ENCODE measurements at regions of chr6 and their contacts with region 1.

Region 1: DNA sequence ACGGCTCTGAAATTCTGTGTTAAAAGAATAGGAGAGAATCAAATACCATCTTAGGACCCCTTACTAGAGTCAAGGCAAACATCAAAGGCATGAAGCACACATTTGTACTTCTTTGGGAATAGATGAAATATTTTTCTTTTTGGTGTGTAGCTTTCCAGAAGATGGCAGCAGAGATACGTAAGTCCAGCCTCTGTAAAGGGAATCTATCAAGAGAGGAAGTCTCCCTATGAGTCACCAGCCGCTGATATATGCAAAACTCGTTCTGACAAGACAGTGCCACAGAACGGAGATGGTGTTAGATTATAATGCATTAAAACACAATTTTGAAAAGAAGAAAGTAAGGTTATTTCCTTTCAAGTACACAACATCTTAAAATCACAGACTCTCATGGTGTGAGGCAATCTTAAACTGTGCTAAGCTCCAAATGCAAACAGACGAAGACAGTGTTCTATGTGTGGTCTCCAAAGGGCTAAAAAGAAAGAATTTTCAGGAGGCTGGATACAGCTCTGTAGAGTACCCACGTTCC is 120.0 kb upstream of the AGPAT4 start:
- DNase-seq: peak; percentile 91
- H3K4me3 Mint-ChIP-seq: no peak overlapping the region
- H3K27ac Mint-ChIP-seq: no peak overlapping the region
- H3K4me1 Mint-ChIP-seq: peaks cover 7% of the 10 kb centered on the region
- H3K27me3 Mint-ChIP-seq: no peaks in the 10 kb centered on the region
- CTCF ChIP-seq: peak; percentile 56

Region 2: GRCh38 chr6:161308075-161308655 is 85.7 kb before region 1 on chr6:
- CTCF ChIA-PET with region 1: no interaction called
- POLR2A ChIA-PET with region 1: no interaction called
- intact Hi-C with region 1: no loop called
- DNase-seq: no peak
- H3K4me3 Mint-ChIP-seq: no peak overlapping the region
- H3K27ac Mint-ChIP-seq: peak overlapping the region; percentile 44
- H3K4me1 Mint-ChIP-seq: peaks cover 25% of the 10 kb centered on the region
- H3K27me3 Mint-ChIP-seq: no peaks in the 10 kb centered on the region
- CTCF ChIP-seq: no peak

Region 3: DNA sequence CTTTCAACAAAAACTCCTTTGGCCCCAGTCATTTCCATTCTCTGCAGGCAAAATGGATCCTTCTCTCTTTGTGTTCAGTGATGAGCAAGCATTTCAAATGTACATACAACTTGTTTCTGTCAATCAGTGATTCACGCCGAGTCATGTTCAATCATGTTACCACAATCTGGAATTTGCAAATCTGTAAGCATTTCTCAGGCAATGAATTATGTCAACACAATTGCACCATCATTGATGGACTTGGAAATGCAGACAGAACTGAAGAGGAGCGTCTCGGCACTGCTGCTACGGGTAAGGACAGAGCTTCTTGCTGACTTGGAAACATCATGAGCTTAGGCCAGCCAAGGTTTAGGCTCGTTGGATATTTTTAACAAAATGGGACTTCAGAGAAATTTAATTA is 12.7 kb after region 1 on chr6:
- CTCF ChIA-PET with region 1: interaction called, 33 read pairs
- POLR2A ChIA-PET with region 1: interaction called, 38 read pairs
- intact Hi-C with region 1: no loop called
- DNase-seq: peak; percentile 97
- H3K4me3 Mint-ChIP-seq: peak overlapping the region; percentile 20
- H3K27ac Mint-ChIP-seq: peak overlapping the region; percentile 73
- H3K4me1 Mint-ChIP-seq: peaks cover 17% of the 10 kb centered on the region
- H3K27me3 Mint-ChIP-seq: no peaks in the 10 kb centered on the region
- CTCF ChIP-seq: no peak

Region 4: DNA sequence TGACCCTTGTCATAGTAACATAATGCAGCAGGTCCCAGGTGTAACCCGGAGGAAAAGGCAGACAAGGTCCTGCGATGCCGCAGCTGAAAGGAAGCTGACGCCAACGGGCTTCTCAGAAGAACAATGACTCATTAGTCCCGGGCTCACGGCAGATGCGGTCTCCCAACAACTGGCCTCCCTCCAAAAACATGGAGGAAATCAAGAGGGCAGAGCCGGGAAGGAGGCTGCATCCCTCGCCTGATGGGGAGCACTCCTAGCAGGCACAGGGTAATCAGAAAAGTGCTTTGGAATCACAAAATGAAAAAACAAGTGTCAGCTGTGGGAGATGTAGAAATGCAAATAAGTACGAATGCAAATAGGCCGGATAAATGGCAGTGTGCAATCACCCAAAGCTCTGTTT is 45.2 kb after region 1 on chr6:
- CTCF ChIA-PET with region 1: interaction called, 10 read pairs
- POLR2A ChIA-PET with region 1: no interaction called
- intact Hi-C with region 1: no loop called
- DNase-seq: peak; percentile 97
- H3K4me3 Mint-ChIP-seq: peak overlapping the region; percentile 40
- H3K27ac Mint-ChIP-seq: peak overlapping the region; percentile 53
- H3K4me1 Mint-ChIP-seq: peaks cover 18% of the 10 kb centered on the region
- H3K27me3 Mint-ChIP-seq: no peaks in the 10 kb centered on the region
- CTCF ChIP-seq: no peak

Region 5: GRCh38 chr6:161498359-161498758 is 104.5 kb after region 1 on chr6:
- CTCF ChIA-PET with region 1: interaction called, 24 read pairs
- POLR2A ChIA-PET with region 1: interaction called, 5 read pairs
- intact Hi-C with region 1: loop called (anchors 1 kb)
- DNase-seq: peak; percentile 80
- H3K4me3 Mint-ChIP-seq: no peak overlapping the region
- H3K27ac Mint-ChIP-seq: peak overlapping the region; percentile 53
- H3K4me1 Mint-ChIP-seq: peaks cover 5% of the 10 kb centered on the region
- H3K27me3 Mint-ChIP-seq: no peaks in the 10 kb centered on the region
- CTCF ChIP-seq: peak; percentile 62

Region 6: GRCh38 chr6:161694995-161695394 is 301.1 kb after region 1 on chr6:
- CTCF ChIA-PET with region 1: interaction called, 6 read pairs
- POLR2A ChIA-PET with region 1: no interaction called
- intact Hi-C with region 1: loop called (anchors 1 kb)
- DNase-seq: peak; percentile 45
- H3K4me3 Mint-ChIP-seq: no peak overlapping the region
- H3K27ac Mint-ChIP-seq: no peak overlapping the region
- H3K4me1 Mint-ChIP-seq: no peaks in the 10 kb centered on the region
- H3K27me3 Mint-ChIP-seq: no peaks in the 10 kb centered on the region
- CTCF ChIP-seq: peak; percentile 35

Region 7: GRCh38 chr6:161804838-161805237 is 410.9 kb after region 1 on chr6:
- CTCF ChIA-PET with region 1: no interaction called
- POLR2A ChIA-PET with region 1: no interaction called
- intact Hi-C with region 1: no loop called
- DNase-seq: no peak
- H3K4me3 Mint-ChIP-seq: no peak overlapping the region
- H3K27ac Mint-ChIP-seq: no peak overlapping the region
- H3K4me1 Mint-ChIP-seq: no peaks in the 10 kb centered on the region
- H3K27me3 Mint-ChIP-seq: no peaks in the 10 kb centered on the region
- CTCF ChIP-seq: no peak